AG04449 (cell line): ENCODE measurements at regions of chr16 and their contacts with region 1.

Region 1: GRCh38 chr16:4253394-4254150 is 11.7 kb upstream of the SRL start:
- DNase-seq: peak; percentile 93
- H3K4me3 ChIP-seq: peak overlapping the region; percentile 66
- CTCF ChIP-seq: no peak

Region 2: GRCh38 chr16:3938848-3939624 is 314.5 kb before region 1 on chr16:
- CTCF ChIA-PET with region 1: interaction called, 11 read pairs
- POLR2A ChIA-PET with region 1: no interaction called
- DNase-seq: peak; percentile 59
- H3K4me3 ChIP-seq: peak overlapping the region; percentile 49
- CTCF ChIP-seq: peak; percentile 91

Region 3: DNA sequence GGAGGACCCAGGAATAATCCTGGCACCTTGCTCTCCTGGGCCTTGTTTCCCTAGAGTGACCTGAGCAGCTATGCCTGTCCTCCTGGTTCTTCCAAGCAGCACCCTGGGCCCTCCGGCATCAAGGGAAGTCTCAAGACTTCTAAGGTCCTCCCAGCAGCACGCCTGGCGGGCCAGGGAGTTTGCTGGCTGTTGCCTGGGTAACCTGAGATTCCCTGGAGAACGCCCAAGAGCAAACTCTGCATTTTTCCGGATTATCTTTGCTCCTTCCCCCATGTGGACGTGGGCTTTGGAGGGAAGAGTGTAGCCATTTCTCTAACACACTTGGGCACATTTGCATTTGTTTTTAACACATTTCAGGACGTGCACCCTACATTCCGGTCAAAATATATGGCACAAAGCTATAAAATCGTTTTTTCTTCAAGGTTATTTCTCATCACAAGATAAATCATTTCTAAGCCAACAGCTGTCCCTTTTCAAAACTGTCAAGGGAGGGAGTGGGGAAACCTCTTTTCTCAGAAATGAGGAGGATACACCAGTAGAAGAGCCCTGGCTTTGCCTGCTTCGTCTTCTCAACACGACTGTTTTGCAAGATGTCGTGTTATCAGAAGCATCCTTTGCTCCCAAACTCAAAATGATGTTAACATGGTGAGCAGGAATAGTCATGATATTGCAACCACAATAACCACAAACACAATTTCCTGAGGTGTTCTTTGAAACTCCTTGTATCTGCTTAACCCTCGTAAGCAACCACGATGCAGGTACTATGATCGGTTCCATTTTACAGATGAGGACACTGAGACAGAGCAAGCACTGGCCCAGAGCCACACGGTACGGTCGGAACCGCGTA is 253.9 kb before region 1 on chr16:
- CTCF ChIA-PET with region 1: interaction called, 10 read pairs
- POLR2A ChIA-PET with region 1: no interaction called
- DNase-seq: no peak
- H3K4me3 ChIP-seq: no peak overlapping the region
- CTCF ChIP-seq: no peak

Region 4: GRCh38 chr16:4200000-4200780 is 53.4 kb before region 1 on chr16:
- CTCF ChIA-PET with region 1: interaction called, 86 read pairs
- POLR2A ChIA-PET with region 1: interaction called, 5 read pairs
- DNase-seq: no peak
- H3K4me3 ChIP-seq: no peak overlapping the region
- CTCF ChIP-seq: peak; percentile 80

Region 5: DNA sequence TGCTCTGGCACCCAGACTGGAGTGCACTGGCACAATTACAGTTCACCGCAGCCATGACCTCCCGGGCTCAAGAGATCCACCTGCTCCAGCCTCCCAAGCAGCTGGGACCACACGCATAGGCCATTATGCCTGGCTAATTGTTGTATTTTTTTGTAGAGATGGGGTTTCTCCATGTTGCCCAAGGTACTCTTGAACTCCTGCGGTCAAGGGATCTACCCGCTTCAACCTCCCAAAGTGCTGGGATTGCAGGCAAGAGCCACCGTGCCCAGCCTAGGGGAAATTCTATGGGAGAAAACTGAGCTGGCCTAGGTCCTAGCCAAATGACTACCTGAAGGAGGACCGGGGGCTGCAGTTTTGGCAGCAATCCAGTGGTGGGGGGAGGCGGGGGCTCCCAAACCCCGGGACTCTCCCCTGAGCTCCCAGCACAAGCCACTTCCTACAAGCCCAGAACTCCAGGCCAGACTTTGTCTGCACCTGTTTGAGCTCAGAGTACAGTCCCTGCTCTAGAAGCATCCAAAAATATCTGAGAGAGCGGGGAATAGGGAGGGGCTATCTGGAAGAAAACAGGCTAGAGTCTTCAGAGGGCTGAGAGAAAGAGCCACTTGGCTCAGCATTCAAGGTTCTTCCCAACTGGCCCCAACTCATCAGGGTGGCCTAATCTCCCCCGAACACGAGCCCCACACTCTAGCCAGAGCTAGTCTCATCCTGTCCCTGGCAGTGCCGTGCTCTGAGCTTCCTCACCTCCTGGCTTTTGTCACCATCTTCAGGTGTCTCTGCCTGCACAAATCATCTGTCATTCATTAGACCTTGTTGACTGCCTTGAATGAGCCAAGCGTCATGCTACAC is 20.8 kb before region 1 on chr16:
- CTCF ChIA-PET with region 1: interaction called, 39 read pairs
- POLR2A ChIA-PET with region 1: interaction called, 9 read pairs
- DNase-seq: no peak
- H3K4me3 ChIP-seq: no peak overlapping the region
- CTCF ChIP-seq: no peak

Region 6: DNA sequence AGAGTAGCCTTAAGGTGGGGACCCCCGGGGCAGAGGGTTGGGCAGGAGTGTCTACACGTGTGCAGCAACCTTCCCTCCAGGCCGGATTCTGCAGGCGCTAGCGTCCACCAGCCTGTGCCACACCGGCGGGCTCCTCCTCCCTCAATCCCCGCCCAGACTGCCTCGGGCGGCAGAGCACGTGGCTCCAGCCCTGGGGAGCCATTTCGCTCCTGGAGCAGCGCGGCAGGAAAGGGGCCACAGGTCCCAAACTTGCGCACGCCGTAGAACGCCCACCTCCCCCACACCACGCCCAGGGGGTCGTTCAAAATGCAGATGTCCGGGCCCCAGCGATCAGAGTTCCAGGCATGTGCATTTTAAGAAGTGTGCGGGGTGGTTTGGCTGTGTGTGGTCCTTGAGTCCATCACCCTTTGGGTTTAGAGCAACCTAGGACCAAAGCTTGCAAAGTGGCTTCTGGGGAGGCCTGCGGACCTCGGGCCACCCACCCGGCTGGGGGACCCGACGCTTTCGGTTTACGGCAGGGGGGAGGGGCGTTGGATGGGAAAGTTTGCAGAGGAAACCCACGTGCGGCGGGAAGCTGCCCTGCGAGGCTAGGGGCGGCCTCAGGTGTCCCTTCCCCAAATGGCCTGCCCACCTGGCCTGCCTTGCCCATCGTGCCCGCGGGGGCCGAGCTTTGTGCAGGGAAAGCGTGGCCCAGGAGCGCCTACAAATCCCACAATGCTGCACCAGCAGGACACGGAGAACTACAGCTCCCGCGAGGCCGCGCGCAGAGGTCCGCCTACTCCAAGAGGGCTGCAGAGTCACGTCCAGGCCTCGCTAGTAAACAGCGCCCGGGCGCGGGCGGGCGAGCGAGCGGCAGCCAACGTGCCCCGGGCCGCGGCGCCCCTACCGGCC is 17.8 kb after region 1 on chr16:
- CTCF ChIA-PET with region 1: interaction called, 68 read pairs
- POLR2A ChIA-PET with region 1: interaction called, 3 read pairs
- DNase-seq: no peak
- H3K4me3 ChIP-seq: peak overlapping the region; percentile 93
- CTCF ChIP-seq: no peak